AG04450 (cell line): ENCODE measurements at regions of chr22 and their contacts with region 1.

Region 1: DNA sequence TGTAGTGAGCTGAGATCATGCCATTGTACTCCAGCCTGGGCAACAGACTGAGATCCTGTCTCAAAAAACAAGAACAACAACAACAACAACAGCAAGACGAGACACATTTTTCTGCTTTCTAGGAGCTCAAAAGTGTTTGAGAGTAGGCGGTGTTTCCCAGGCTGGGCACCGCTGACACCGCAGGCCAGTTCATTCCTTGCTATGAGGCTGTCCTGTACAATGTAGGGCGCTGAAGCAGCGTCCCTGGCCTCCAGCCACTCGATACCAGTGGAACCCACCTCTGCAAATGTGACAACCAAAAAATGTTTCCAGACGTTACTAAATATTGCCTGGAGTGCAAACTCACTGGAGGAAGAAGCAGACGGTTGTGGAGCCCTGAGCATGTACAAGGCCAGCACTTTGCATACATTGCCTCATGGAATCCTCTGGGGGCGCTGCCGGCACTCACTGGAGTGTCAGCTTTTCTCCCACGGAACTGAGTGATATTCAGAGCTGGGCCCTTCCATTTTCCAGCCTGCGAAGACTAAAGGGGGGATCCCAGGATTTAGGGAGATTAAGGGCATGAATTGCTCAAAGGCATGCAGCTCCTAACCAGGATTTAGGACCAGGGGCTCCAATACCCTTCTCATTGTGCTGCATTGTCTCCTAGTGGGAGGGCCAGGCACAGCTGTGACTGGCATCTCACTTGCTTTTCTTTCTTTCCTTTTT is 5.8 kb upstream of the MIEF1 start:
- DNase-seq: no peak
- H3K4me3 ChIP-seq: no peak overlapping the region
- H3K27ac ChIP-seq: no peak overlapping the region
- H3K27me3 ChIP-seq: no peaks in the 10 kb centered on the region
- CTCF ChIP-seq: peak; percentile 85

Region 2: DNA sequence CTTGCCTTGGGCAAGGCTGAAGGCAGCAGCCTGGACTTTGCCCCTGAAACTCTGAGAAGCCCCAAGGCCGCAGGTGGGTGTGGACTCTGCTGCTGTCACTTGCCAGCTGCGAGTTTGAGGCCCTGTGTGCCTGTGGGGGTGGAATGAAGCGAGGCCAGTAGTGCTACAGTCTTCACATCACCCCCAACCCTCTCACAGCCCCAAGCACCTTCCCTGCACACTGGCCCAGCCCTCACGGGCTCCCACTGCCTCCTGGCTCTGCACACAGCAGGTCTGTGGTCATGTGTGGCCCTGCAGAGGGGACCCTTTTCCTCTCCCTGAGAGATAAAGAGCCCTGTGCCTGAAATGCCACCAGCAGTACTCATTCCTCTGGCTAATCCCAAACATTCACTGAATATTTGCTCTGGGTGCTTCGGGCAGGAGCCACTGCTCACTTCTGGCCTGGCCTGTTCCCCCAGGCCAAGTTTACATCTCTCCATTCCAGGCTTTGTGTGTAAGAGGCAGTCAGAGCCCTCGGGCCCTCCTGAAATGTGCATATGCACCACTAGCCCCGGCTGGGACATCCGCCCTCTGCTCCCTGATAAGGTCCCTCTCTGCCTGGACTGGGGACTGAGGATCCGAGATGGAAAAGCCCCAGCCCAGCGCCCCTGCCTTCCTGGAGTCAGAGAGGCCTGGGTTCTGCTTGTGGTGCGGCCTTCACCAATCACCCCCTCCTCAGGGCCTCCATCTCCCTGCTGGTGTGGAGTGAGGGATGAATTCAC is 21.8 kb before region 1 on chr22:
- CTCF ChIA-PET with region 1: interaction called, 12 read pairs
- POLR2A ChIA-PET with region 1: no interaction called
- DNase-seq: no peak
- H3K4me3 ChIP-seq: no peak overlapping the region
- H3K27ac ChIP-seq: peak overlapping the region; percentile 47
- H3K27me3 ChIP-seq: no peaks in the 10 kb centered on the region
- CTCF ChIP-seq: no peak

Region 3: GRCh38 chr22:39482768-39483167 is 13.5 kb before region 1 on chr22:
- CTCF ChIA-PET with region 1: interaction called, 11 read pairs
- POLR2A ChIA-PET with region 1: no interaction called
- DNase-seq: no peak
- H3K4me3 ChIP-seq: no peak overlapping the region
- H3K27ac ChIP-seq: no peak overlapping the region
- H3K27me3 ChIP-seq: peaks cover 10% of the 10 kb centered on the region
- CTCF ChIP-seq: no peak

Region 4: GRCh38 chr22:39559454-39560105 is 63.3 kb after region 1 on chr22:
- CTCF ChIA-PET with region 1: no interaction called
- POLR2A ChIA-PET with region 1: no interaction called
- DNase-seq: no peak
- H3K4me3 ChIP-seq: no peak overlapping the region
- H3K27ac ChIP-seq: no peak overlapping the region
- H3K27me3 ChIP-seq: peaks cover 56% of the 10 kb centered on the region
- CTCF ChIP-seq: peak; percentile 42